ENCODE measurements at regions of chr3 and their contacts with region 1.

Region 1: DNA sequence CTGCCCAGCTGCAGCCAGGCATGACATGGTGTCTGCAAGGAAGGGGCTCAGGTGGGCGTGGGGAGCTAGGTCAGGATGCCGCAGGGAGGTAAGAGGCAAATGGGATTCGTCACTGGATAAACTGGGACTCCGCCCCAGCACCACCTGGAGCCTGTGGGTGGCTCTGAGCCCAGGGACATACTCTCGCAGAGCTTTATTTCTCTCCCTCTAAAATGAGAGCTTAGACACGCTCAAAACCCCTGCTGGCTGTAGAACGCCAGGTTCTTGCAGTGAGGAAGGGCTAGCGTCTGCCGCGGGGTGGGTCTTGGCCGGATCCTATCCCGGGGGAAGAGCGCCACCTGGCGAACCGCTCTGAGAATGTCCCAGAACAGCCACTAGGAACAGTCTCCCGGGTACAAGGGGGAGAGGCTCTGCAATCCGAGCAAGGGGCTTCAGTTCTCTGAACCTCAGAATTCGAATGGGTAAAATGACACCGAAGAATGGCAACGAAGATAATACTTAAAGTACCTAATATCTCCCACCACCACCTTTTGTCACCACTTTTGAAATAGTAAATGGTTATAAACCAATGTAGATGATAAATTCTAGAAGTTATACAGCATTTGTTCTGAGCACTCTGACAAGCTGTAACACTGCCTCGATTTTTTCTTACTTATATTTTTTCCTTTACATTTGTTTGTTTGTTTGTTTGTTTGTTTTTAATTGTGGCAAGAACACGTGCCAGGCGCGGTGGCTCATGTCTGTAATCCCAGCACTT is 53.2 kb upstream of the SRGAP3 start:
- DNase-seq: no peak
- H3K4me3 ChIP-seq: peak overlapping the region; percentile 23 to 50 (median 34)
- H3K27ac ChIP-seq: no peak overlapping the region
- H3K4me1 ChIP-seq: peaks cover 5 to 8% (median 7%) of the 10 kb centered on the region in 4 donors
- H3K27me3 ChIP-seq: no peaks in the 10 kb centered on the region
- CTCF ChIP-seq: peak; percentile 82 to 91 (median 86)
- EP300 ChIP-seq: no peak
- POLR2A ChIP-seq: no peak

Region 2: GRCh38 chr3:8970971-8971589 is 331.5 kb before region 1 on chr3:
- intact Hi-C with region 1: loop called (anchors 1 kb)
- DNase-seq: peak; percentile 92
- H3K4me3 ChIP-seq: no peak overlapping the region
- H3K27ac ChIP-seq: no peak overlapping the region
- H3K4me1 ChIP-seq: no peaks in the 10 kb centered on the region
- H3K27me3 ChIP-seq: peaks cover 0 to 28% (median 0%) of the 10 kb centered on the region in 4 donors
- CTCF ChIP-seq: peak; percentile 96 to 99 (median 98)
- EP300 ChIP-seq: no peak
- POLR2A ChIP-seq: no peak

Measured in esophagus muscularis mucosa (tissue), 4 donors.